ENCODE measurements at regions of chr2 and their contacts with region 1.

Region 1: DNA sequence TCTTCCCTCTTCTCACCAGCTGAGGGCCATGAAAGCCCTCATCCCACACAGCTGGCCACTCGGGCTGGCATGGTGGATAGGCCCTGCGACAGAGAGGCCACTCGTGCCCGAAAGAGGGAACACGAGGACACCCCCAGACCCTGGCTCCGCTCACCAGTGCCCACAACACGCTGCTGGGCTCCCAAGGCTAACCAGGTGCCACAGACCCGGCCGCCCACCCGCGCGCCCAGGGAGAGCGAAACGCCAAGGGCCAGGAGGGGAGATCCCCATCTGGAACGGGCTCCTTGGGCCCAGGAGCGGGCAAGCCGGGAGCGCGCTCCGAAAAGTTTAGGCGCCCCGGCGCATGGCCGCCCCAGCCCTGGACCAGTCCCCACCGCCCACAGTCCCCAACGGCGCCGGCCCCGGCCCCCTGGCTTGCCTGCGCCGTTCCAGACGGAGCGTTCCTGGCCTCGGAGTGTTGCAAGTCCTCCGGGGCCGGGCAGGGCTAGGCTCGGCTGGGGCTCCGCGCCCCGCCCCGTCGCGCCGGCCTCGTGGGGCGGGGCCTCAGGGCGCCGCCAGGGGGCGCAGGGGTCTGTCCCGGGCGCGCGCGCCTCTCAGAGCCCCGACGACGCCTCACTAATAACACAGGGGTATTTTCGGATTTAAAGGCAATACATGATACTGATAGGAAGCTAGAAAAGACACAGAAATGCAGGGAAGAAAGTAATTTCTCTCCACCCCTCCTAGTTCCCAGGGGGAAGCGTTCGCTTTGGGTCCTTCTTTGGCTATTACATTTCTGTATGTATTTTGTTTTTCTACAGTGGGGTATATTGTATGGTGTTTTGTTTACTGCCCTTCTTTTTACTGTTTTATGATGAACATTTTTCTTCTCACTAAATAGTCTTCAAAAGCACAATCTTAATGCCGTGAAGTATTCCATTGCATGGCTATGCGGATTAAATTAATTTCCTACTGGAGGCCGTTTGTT is at the start of gene TMBIM1:
- DNase-seq: no peak
- H3K4me3 ChIP-seq: peak within 1 kb of the TSS; percentile 85
- CTCF ChIP-seq: peak; percentile 64

Region 2: DNA sequence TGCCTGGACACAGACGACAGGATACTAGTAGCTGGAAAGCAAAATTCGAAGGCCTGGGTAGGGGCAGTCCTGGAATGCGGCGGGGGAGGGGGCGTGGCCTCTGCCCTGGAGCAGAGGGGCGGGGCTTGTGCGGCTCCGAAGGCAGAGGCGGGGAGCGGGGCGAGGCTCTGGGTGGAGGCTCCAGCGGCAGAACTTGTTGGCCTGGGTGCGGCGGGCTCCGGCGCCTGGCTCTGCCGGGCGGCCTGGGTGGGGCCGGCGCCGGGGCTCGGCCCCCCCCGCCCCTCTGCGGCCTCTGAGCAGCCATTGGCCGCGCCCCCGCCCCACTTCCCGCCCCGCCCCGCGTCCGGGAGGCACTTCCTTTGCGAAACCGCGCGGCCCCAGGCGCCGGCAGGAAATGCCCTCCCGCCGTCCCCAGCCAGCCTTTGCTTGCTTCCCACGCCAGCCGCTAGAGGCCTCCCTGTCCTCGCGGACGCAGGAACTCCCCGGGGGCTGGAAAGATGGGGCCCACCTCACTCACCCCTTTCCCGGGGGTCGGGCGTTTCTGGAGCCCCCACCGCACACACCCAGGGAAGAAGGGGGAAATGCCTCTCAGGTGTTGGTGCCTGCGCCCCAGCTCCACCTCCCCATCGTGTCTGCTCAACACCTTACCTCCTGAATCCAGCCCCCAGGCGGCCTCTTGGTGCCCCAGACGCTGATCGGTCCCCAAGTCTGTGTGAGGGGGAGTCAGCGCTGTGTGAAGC is 114.0 kb after region 1 on chr2:
- CTCF ChIA-PET with region 1: interaction called, 10 read pairs
- POLR2A ChIA-PET with region 1: no interaction called
- DNase-seq: peak; percentile 57
- H3K4me3 ChIP-seq: peak overlapping the region; percentile 54
- CTCF ChIP-seq: peak; percentile 95